ENCODE measurements at regions of chr3 and their contacts with region 1.

Region 1: GRCh38 chr3:38117748-38118420 is 19.0 kb downstream of the ACAA1 start:
- DNase-seq: peak; percentile 43
- H3K4me3 ChIP-seq: no peak overlapping the region
- H3K27ac ChIP-seq: no peak overlapping the region
- H3K4me1 ChIP-seq: no peaks in the 10 kb centered on the region
- H3K27me3 ChIP-seq: no peaks in the 10 kb centered on the region
- CTCF ChIP-seq: peak; percentile 83 to 92

Region 2: GRCh38 chr3:38004415-38005076 is 113.3 kb before region 1 on chr3:
- CTCF ChIA-PET with region 1: interaction called, 3 read pairs
- dilution Hi-C with region 1: no loop called
- in situ Hi-C with region 1: no loop called
- intact Hi-C with region 1: loop called (anchors 1 kb)
- DNase-seq: peak; percentile 70
- H3K4me3 ChIP-seq: no peak overlapping the region
- H3K27ac ChIP-seq: no peak overlapping the region
- H3K4me1 ChIP-seq: peaks cover 25% of the 10 kb centered on the region
- H3K27me3 ChIP-seq: no peaks in the 10 kb centered on the region
- CTCF ChIP-seq: peak; percentile 84 to 89

Region 3: DNA sequence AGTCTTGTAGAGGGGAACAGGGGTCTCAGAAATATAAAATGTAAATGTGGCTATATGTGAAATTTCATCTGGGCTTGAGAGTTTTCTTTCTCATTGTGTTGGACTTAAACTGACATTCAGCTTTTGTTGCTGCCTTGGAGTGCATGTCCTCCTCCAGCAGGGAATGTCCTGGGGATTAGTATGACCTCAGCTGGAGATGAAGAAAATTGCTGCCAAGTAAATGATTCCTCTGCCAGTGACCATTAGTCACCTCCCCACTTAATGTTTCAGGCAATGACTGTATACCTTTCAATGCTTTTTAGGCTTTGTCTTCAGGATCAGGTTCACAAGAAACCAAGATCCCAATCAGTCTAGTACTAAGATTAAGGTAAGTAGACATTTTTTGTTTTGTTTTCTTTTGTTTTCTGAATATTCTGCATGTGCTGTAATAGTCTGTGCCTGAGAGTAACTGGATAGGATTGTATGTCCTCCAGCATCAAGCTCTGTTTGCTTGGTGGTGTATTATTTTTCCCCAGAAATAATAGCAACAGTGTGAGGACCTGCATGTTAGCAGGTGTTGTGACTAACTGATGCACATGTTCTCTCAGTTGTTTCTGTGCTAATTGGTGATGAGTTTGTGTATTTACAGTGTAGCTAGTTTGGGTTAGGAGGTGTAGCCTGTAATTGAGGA is 129.6 kb after region 1 on chr3:
- CTCF ChIA-PET with region 1: interaction called, 5 read pairs
- dilution Hi-C with region 1: no loop called
- in situ Hi-C with region 1: no loop called
- intact Hi-C with region 1: loop called (anchors 1 kb)
- DNase-seq: peak; percentile 91
- H3K4me3 ChIP-seq: no peak overlapping the region
- H3K27ac ChIP-seq: peak overlapping the region; percentile 53
- H3K4me1 ChIP-seq: peaks cover 12% of the 10 kb centered on the region
- H3K27me3 ChIP-seq: no peaks in the 10 kb centered on the region
- CTCF ChIP-seq: peak; percentile 31 to 55

Region 4: DNA sequence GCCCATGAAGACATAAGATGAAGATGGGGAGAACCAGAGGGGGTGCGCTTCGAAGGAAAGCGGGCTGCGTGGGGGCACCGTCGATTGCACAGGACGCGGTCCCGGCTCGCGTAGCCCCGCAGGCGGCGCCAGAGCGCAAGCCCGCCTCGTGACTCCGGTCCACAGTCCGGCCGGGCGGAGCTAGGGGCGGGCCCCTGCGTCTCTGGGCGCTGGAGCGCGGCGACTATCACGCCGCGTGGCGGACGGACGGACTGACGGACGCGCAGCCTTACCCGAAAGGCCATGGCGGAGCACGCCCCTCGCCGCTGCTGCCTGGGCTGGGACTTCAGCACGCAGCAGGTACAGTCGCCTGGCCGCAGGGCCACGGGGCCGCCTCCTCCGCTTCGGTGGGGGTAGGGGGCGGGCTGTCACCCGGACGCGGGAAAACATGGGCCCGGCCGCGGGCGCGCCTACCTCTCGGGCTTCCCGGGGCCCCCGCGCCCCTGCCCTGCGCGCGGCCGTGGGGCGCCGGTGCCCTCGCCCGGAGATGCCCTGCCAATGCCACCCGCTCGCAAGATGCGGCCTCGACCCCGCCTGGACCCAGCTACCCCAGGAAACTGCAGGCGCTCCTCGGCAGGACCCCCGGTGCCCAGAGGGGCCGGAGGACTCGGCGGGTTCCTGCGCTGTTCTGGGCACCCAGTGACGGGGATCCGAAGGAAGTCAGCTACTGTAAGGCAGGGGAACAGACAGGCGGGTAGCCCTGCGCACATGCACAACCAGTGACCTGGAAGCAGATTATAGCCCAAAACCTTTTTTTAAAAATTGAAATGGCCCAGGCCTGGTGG is 228.9 kb after region 1 on chr3 and contains the start of gene XYLB:
- CTCF ChIA-PET with region 1: no interaction called
- dilution Hi-C with region 1: no loop called
- in situ Hi-C with region 1: no loop called
- intact Hi-C with region 1: loop called (anchors 2 kb)
- DNase-seq: peak; percentile 75
- H3K4me3 ChIP-seq: peak within 1 kb of the TSS; percentile 76 to 91 (median 90)
- H3K27ac ChIP-seq: no peak within 1 kb of the TSS
- H3K4me1 ChIP-seq: peaks cover 4% of the 10 kb centered on the region
- H3K27me3 ChIP-seq: no peaks in the 10 kb centered on the region
- CTCF ChIP-seq: peak; percentile 59 to 88
- total RNA-seq, gene XYLB: 3.0 to 4.5 TPM

Region 5: DNA sequence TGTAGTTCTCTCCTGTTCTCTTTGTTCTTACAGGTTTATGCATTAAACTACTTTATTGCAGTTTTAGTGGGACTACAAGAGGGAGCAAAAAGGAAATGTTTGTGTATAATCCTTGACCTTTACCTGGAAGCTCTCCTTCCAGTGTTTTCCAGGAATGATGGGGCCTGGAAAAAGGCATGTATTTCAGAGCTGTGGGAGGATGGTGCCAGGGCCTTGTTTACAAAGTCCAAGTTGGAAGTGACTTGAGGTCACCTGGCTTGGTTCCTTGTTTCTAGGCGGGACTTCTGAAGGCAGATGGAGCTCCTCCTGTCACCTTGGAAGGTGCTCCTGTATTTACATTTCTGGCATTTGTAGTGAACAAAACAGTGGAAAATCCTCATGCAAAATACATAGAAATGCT is 350.9 kb after region 1 on chr3:
- CTCF ChIA-PET with region 1: no interaction called
- dilution Hi-C with region 1: no loop called
- in situ Hi-C with region 1: no loop called
- intact Hi-C with region 1: no loop called
- DNase-seq: no peak
- H3K4me3 ChIP-seq: no peak overlapping the region
- H3K27ac ChIP-seq: no peak overlapping the region
- H3K4me1 ChIP-seq: no peaks in the 10 kb centered on the region
- H3K27me3 ChIP-seq: no peaks in the 10 kb centered on the region
- CTCF ChIP-seq: no peak

Region 6: DNA sequence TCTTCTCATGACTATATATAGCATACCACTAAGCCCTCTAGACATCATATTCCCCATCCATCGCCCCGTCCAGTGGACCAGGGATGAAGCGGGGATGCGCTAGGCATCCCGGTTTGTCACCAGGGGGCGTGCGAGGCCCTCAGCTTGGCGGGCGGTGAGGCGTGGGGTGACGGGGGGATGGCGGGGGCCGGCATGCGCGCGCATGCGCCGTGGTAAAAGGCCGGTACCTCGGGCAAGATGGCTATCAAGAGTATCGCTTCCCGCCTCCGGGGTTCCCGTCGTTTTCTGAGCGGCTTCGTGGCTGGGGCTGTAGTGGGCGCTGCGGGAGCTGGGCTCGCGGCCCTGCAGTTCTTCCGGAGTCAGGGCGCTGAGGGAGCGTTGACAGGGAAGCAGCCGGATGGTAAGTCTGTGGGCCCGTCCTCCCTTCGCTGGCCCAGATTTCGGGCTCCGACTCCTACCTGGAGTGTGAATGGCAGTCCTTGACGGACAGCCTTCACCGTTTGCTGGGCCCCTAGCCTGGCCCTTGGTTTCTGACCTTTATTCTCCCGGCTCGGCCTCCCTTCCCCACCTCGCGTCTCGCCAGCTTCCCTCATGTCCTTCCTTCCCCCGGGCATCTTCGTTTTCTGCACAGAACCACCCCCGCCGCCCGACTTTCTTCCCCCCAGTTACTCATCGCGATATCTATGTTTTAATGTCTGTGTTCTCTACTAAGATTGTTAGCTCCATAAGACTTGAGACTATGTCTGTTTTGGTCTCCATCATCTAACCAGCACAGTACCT is 378.4 kb after region 1 on chr3 and contains the start of gene EXOG:
- CTCF ChIA-PET with region 1: no interaction called
- dilution Hi-C with region 1: no loop called
- in situ Hi-C with region 1: loop called in 1 of 2 experiments (anchors 25 kb)
- intact Hi-C with region 1: no loop called
- DNase-seq: peak; percentile 85
- H3K4me3 ChIP-seq: peak within 1 kb of the TSS; percentile 79 to 89 (median 81)
- H3K27ac ChIP-seq: peak within 1 kb of the TSS; percentile 63
- H3K4me1 ChIP-seq: no peaks in the 10 kb centered on the region
- H3K27me3 ChIP-seq: no peaks in the 10 kb centered on the region
- CTCF ChIP-seq: peak; percentile 49 to 90
- total RNA-seq, gene EXOG: 8.0 to 19.9 TPM